ENCODE measurements at regions of chr1 and their contacts with region 1.

Region 1: DNA sequence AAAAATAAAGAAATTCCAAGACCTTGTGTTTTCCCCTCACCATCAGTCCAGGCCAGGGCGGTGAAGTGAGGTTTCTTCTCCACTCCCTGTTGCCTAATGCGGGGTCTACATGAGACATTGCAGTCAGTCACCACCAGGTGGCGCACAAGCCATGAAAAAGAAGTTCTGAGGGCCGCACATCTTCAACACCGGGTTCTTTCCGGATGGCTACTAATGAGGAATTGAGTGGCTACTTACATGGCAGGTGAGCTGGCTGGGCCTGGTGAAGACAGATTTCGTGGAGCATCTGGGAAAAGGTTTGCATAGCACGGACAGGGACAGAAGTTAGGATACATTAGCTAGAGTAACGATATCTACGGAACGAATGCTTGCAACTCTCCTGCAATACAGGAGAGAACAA is 15.8 kb upstream of the S100A11 start:
- DNase-seq: peak; percentile 58 to 88
- H3K4me3 ChIP-seq: no peak overlapping the region
- H3K4me1 ChIP-seq: peaks cover 13% of the 10 kb centered on the region
- H3K27me3 ChIP-seq: peaks cover 38% of the 10 kb centered on the region

Region 2: GRCh38 chr1:152189657-152190442 is 137.2 kb after region 1 on chr1:
- in situ Hi-C with region 1: loop called (anchors 10 kb)
- DNase-seq: peak; percentile 78 to 87
- H3K4me3 ChIP-seq: no peak overlapping the region
- H3K4me1 ChIP-seq: no peaks in the 10 kb centered on the region
- H3K27me3 ChIP-seq: 0 out of 2 replicates have a peak, but pooled peaks cover 1% of the 10 kb centered on the region

Measured in HAP-1 (cell line).